ENCODE measurements at regions of chr18 and their contacts with region 1.

Region 1: GRCh38 chr18:58057291-58057965 is 13.4 kb downstream of the NEDD4L start:
- DNase-seq: no peak
- ATAC-seq: no peak
- H3K4me3 ChIP-seq: no peak overlapping the region
- H3K27ac ChIP-seq: no peak overlapping the region
- H3K4me1 ChIP-seq: no peaks in the 10 kb centered on the region
- H3K27me3 ChIP-seq: no peaks in the 10 kb centered on the region
- CTCF ChIP-seq: no peak
- POLR2A ChIP-seq: no peak

Region 2: DNA sequence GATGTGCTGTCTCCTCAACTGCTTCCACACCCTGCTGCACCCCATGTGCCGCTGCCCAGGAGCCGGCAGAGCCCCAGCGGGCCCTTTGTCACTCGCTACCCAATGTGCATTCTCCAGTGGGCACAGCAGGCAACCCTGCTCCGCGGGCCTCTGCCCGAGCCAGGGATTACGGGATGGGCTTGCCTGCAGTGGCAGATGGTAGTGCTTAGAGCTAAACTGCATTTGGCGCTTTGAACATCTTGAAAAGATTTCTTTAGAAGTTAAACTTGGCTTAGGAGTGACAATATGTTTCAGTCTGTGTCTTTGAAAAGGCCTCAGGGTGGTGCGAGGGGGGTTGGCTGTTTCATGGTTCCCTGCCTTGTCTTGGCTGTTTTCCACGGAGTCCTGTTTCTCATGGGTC is 994.6 kb before region 1 on chr18:
- intact Hi-C with region 1: no loop called
- DNase-seq: no peak
- ATAC-seq: no peak
- H3K4me3 ChIP-seq: no peak overlapping the region
- H3K27ac ChIP-seq: no peak overlapping the region
- H3K4me1 ChIP-seq: no peaks in the 10 kb centered on the region
- H3K27me3 ChIP-seq: peaks cover 0 to 8% (median 0%) of the 10 kb centered on the region in 9 donors
- CTCF ChIP-seq: no peak
- POLR2A ChIP-seq: no peak

Region 3: DNA sequence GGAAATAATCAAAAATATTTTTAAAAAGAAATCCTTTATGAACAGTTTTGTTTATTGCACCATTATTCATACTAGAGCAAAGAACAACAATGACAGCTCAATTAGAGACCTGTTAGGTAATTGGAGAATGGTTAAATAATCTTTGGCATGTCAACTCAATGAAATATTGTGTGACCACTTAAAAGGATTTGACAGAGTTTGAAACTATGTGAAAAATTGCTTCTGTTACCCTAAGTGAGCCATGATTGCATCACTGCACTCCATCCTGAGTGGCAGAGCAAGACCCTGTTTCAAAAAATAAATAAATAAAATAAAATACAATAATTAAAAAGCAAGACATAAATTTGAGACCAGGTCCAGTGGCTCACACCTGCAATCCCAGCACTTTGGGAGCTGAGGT is 188.2 kb before region 1 on chr18:
- intact Hi-C with region 1: no loop called
- DNase-seq: no peak
- ATAC-seq: no peak
- H3K4me3 ChIP-seq: no peak overlapping the region
- H3K27ac ChIP-seq: no peak overlapping the region
- H3K4me1 ChIP-seq: no peaks in the 10 kb centered on the region
- H3K27me3 ChIP-seq: no peaks in the 10 kb centered on the region
- CTCF ChIP-seq: no peak
- POLR2A ChIP-seq: no peak

Region 4: DNA sequence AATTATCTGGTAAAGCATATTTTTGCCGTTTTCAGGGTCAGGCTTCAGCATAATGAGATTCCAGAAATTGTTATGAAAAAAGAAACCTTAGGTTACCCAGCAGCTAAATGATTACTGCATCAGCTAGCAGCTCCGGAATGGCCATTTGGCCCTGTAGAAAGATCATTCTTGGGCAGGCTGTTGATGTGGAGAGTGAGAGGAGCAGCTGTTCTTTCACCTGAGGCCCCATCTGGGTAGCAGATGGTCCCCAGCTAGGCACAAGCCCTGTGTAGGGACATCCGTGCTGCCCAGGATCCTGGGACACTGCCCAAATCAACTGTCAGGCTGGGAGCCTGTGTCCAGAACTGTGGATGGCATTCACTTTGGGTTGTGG is 48.4 kb after region 1 on chr18:
- intact Hi-C with region 1: loop called in 1 of 10 experiments (anchors 5 kb)
- DNase-seq: no peak
- ATAC-seq: no peak
- H3K4me3 ChIP-seq: no peak overlapping the region
- H3K27ac ChIP-seq: no peak overlapping the region
- H3K4me1 ChIP-seq: peaks cover 0 to 7% (median 0%) of the 10 kb centered on the region in 12 donors
- H3K27me3 ChIP-seq: no peaks in the 10 kb centered on the region
- CTCF ChIP-seq: no peak
- POLR2A ChIP-seq: no peak

Region 5: DNA sequence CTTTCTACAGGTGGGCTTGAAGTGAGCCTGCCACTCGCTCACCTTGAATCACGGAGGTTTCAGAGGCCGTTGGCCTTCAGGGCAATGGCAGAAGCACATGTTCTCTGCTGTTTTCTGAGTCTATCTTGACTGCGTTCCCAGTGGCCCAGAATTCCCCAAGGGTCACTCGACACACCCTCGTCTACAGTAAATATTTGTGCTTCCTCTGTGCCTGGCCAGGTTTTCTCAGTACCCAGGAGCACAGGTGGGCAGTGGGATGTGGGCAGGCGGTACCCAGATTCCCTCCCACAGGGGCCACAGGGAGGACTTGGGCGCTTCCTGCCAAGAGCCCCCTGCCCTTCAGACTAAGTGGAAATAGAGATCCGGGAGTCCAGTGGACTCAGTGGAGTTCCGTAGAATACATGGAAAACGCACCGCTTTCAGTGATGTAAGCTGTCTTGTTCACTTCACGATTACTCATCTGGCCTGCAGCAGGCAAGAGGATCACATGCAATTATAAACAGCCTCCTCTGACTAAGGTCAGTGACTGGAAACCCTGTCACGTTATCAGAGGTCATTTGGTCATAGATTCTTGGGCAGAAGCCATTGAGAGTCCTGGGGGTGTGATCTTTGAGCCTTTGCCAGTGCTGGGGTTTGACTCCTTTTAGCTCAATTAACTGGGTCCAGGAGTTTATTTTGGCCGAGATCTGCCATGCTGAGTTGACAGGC is 166.4 kb after region 1 on chr18:
- intact Hi-C with region 1: no loop called
- DNase-seq: peak in 4 of 5 donors; percentile 30 to 64 (median 50)
- ATAC-seq: peak; percentile 73 to 95 (median 94)
- H3K4me3 ChIP-seq: peak overlapping the region in 2 of 12 donors; percentile 2 to 21
- H3K27ac ChIP-seq: peak overlapping the region in 11 of 12 donors; percentile 68 to 83 (median 78)
- H3K4me1 ChIP-seq: peaks cover 0 to 33% (median 20%) of the 10 kb centered on the region in 12 donors
- H3K27me3 ChIP-seq: no peaks in the 10 kb centered on the region
- CTCF ChIP-seq: no peak
- POLR2A ChIP-seq: no peak

Measured in heart left ventricle (tissue), 16 donors.